Activated CD4-positive, alpha-beta T cell treated with anti-CD3 and anti-CD28 coated beads for 36 hours (primary cell): ENCODE measurements at regions of chr6 and their contacts with region 1.

Region 1: GRCh38 chr6:2988426-2989331 is 11.0 kb upstream of the NQO2 start:
- DNase-seq: peak; percentile 89
- ATAC-seq: peak; percentile 81
- H3K4me3 Mint-ChIP-seq: peak overlapping the region; percentile 87
- H3K27ac Mint-ChIP-seq: peak overlapping the region; percentile 99
- H3K4me1 Mint-ChIP-seq: peaks cover 20% of the 10 kb centered on the region
- H3K27me3 Mint-ChIP-seq: no peaks in the 10 kb centered on the region

Region 2: GRCh38 chr6:2166717-2167116 is 822.0 kb before region 1 on chr6:
- CTCF ChIA-PET with region 1: no interaction called
- POLR2A ChIA-PET with region 1: no interaction called
- intact Hi-C with region 1: no loop called
- DNase-seq: no peak
- ATAC-seq: no peak
- H3K4me3 Mint-ChIP-seq: no peak overlapping the region
- H3K27ac Mint-ChIP-seq: no peak overlapping the region
- H3K4me1 Mint-ChIP-seq: peaks cover 24% of the 10 kb centered on the region
- H3K27me3 Mint-ChIP-seq: no peaks in the 10 kb centered on the region

Region 3: DNA sequence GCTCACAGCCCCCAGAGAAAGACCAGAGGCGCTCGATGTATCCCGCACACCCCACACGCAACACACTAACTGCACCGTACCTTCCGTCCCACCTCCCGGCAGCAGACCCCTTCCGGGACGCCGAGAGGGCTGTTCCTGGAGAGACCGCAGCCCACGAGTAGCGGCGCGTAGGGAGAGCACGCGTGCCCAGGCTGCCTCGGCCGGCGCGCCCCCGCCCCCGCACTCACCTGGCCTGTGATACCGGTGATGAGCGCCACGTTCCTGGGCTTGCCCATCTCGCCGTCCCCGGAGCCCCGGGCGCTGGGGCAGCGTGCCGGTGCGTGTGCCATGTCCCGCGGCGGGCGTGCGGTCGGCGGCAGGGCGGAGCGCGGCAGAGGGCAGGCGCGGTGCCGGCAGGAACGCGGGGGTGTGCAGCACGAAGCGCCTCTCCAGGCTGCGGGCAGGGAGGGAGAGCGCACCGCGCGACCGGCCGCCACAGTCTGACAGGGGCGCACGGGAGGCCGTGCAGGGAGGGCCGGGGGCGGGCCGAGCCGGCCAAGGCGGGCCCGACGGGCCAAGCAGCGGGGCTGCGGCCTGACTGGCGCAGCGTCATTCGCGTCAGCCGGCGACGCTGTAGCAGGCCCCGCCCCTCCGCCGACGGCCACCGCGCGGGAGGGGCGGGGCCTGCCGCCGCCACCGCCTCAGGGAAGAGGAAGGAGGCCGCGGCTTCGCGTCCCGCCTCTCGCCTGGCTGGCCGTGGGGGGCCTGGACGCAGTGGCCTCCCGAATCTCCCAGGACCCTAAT is 743.4 kb before region 1 on chr6 and contains the start of gene GMDS:
- CTCF ChIA-PET with region 1: no interaction called
- POLR2A ChIA-PET with region 1: no interaction called
- intact Hi-C with region 1: loop called in 1 of 2 experiments (anchors 1 kb)
- DNase-seq: peak; percentile 89
- ATAC-seq: peak; percentile 94
- H3K4me3 Mint-ChIP-seq: peak within 1 kb of the TSS; percentile 91
- H3K27ac Mint-ChIP-seq: peak within 1 kb of the TSS; percentile 97
- H3K4me1 Mint-ChIP-seq: peaks cover 56% of the 10 kb centered on the region
- H3K27me3 Mint-ChIP-seq: no peaks in the 10 kb centered on the region
- total RNA-seq, gene GMDS: 33.2 to 33.5 TPM

Region 4: GRCh38 chr6:2848851-2849250 is 139.8 kb before region 1 on chr6:
- CTCF ChIA-PET with region 1: interaction called, 50 read pairs
- POLR2A ChIA-PET with region 1: interaction called, 3 read pairs
- intact Hi-C with region 1: loop called (anchors 1 kb)
- DNase-seq: peak; percentile 86
- ATAC-seq: peak; percentile 69
- H3K4me3 Mint-ChIP-seq: peak overlapping the region; percentile 58
- H3K27ac Mint-ChIP-seq: peak overlapping the region; percentile 88
- H3K4me1 Mint-ChIP-seq: peaks cover 59% of the 10 kb centered on the region
- H3K27me3 Mint-ChIP-seq: no peaks in the 10 kb centered on the region

Region 5: DNA sequence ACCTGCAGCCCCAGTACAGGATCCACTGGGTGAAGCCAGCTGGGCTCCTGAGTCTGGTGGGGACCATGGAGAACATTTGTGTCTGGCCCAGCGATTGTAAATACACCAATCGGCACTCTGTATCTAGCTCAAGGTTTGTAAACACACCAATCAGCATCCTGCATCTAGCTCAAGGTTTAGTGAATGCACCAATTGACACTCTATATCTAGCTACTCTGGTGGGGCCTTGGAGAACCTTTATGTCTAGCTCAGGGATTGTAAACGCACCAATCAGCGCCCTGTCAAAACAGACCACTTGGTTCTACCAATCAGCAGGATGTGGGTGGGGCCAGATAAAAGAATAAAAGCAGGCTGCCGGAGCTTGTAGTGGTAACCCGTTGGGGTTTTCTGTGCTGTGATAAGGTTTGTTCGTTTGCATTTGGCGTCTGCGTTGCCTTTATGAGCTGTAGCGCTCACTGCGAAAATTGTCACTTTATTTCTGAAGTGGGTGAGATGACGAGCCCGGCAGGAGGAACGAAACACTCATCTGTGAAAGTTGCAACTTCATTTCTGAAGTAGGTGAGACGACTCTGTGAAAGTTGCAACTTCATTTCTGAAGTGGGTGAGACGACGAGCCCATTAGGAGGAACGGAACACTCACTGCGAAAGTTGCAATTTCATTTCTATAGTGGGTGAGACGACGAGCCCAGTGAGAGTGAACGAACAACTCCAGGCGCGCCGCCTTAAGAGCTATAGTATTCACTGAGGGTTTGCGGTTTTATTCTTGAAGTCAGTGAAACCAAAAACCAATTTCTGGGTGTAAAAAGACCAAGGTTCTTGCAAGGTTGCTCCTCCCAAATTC is 48.4 kb before region 1 on chr6:
- CTCF ChIA-PET with region 1: interaction called, 26 read pairs
- POLR2A ChIA-PET with region 1: interaction called, 43 read pairs
- intact Hi-C with region 1: loop called (anchors 1 kb)
- DNase-seq: peak; percentile 92
- ATAC-seq: peak; percentile 84
- H3K4me3 Mint-ChIP-seq: peak overlapping the region; percentile 50
- H3K27ac Mint-ChIP-seq: peak overlapping the region; percentile 94
- H3K4me1 Mint-ChIP-seq: peaks cover 67% of the 10 kb centered on the region
- H3K27me3 Mint-ChIP-seq: no peaks in the 10 kb centered on the region

Region 6: DNA sequence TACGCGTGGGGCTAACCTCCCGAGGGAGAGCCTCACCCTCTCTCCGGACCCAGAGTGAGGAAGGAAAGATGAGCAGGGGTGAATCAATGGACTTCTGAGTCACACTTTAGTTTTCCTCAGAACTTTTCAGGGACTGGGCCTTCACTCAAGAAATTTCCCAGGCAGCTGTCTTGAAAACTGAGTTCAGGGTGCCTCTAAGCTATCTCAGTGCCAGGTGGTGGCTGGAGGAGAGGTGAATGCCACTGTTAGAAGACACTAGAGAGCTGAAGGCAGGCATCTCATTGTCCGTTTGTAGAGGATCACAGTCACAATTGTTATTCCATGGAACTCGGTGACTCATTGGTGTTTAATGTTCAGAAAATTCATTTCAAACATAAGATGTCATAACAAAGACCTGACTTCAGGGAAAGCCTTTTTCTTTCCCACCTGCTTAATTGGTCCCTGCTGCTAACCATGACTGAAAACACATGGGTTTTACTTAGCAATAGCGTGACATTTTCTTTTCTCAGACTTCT is 12.1 kb before region 1 on chr6:
- CTCF ChIA-PET with region 1: interaction called, 27 read pairs
- POLR2A ChIA-PET with region 1: interaction called, 3 read pairs
- intact Hi-C with region 1: loop called (anchors 1 kb)
- DNase-seq: peak; percentile 22
- ATAC-seq: peak; percentile 54
- H3K4me3 Mint-ChIP-seq: no peak overlapping the region
- H3K27ac Mint-ChIP-seq: peak overlapping the region; percentile 91
- H3K4me1 Mint-ChIP-seq: peaks cover 38% of the 10 kb centered on the region
- H3K27me3 Mint-ChIP-seq: peaks cover 29% of the 10 kb centered on the region

Region 7: GRCh38 chr6:3118353-3119039 is 129.8 kb after region 1 on chr6 and contains the start of gene BPHL:
- CTCF ChIA-PET with region 1: interaction called, 3 read pairs
- POLR2A ChIA-PET with region 1: no interaction called
- intact Hi-C with region 1: loop called in 1 of 2 experiments (anchors 1 kb)
- DNase-seq: peak; percentile 100
- ATAC-seq: peak; percentile 90
- H3K4me3 Mint-ChIP-seq: peak within 1 kb of the TSS; percentile 76
- H3K27ac Mint-ChIP-seq: peak within 1 kb of the TSS; percentile 60
- H3K4me1 Mint-ChIP-seq: peaks cover 22% of the 10 kb centered on the region
- H3K27me3 Mint-ChIP-seq: no peaks in the 10 kb centered on the region
- total RNA-seq, gene BPHL: 15.8 to 16.7 TPM

Region 8: GRCh38 chr6:3226848-3227362 is 238.2 kb after region 1 on chr6:
- CTCF ChIA-PET with region 1: no interaction called
- POLR2A ChIA-PET with region 1: no interaction called
- intact Hi-C with region 1: no loop called
- DNase-seq: peak; percentile 47
- ATAC-seq: no peak
- H3K4me3 Mint-ChIP-seq: peak overlapping the region; percentile 51
- H3K27ac Mint-ChIP-seq: no peak overlapping the region
- H3K4me1 Mint-ChIP-seq: peaks cover 41% of the 10 kb centered on the region
- H3K27me3 Mint-ChIP-seq: peaks cover 54% of the 10 kb centered on the region

Region 9: GRCh38 chr6:4018172-4018905 is 1029.7 kb after region 1 on chr6:
- CTCF ChIA-PET with region 1: no interaction called
- POLR2A ChIA-PET with region 1: no interaction called
- intact Hi-C with region 1: loop called in 1 of 2 experiments (anchors 10 kb)
- DNase-seq: peak; percentile 99
- ATAC-seq: peak; percentile 65
- H3K4me3 Mint-ChIP-seq: peak overlapping the region; percentile 95
- H3K27ac Mint-ChIP-seq: peak overlapping the region; percentile 99
- H3K4me1 Mint-ChIP-seq: peaks cover 53% of the 10 kb centered on the region
- H3K27me3 Mint-ChIP-seq: no peaks in the 10 kb centered on the region